Tibial artery (tissue), 4 donors: ENCODE measurements at regions of chr5 and their contacts with region 1.

Region 1: DNA sequence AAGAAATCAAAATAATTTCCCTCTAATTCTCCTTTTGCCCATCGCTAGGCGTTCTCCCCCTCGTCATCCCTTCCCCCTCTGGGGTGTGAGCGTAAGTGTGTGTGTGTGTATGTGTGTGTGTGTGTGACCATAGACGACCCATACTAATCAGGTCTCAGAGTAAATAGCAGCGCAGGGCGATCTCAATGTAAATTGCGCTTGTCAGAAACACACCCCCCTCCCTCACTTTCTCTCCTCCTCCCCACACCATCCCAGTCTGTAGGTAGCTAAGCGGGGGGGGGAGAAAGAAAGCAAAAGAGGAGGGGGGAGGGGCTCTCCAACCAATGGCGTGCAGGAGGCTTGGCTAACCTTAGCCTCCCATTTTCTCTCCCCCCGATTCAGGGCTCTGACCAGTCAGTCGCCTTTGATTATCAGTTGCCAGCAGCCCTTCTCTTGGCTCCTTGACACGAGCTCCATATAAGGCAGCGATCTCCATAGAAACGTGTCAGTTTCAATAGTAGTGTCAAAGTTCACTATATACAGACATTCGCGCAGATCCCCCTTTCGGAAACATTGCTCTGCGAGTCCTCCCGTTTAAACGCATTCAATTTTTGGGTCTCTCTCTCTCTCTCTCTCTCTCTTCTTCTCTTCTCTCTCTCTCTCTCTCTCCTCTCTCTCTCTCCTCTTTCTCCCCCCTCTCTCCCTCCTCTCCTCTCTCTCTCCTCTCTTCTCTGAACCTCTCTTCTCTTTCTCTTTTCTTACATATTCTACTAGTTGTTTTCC is at the start of gene NR2F1:
- DNase-seq: peak in 1 of 2 donors; percentile 54
- H3K4me3 ChIP-seq: peak within 1 kb of the TSS; percentile 58 to 68
- H3K27ac ChIP-seq: no peak within 1 kb of the TSS
- H3K4me1 ChIP-seq: peaks cover 0 to 47% (median 32%) of the 10 kb centered on the region in 4 donors
- H3K27me3 ChIP-seq: peaks cover 0 to 14% of the 10 kb centered on the region in 2 donors
- CTCF ChIP-seq: peak in 1 of 2 experiments; percentile 68

Region 2: DNA sequence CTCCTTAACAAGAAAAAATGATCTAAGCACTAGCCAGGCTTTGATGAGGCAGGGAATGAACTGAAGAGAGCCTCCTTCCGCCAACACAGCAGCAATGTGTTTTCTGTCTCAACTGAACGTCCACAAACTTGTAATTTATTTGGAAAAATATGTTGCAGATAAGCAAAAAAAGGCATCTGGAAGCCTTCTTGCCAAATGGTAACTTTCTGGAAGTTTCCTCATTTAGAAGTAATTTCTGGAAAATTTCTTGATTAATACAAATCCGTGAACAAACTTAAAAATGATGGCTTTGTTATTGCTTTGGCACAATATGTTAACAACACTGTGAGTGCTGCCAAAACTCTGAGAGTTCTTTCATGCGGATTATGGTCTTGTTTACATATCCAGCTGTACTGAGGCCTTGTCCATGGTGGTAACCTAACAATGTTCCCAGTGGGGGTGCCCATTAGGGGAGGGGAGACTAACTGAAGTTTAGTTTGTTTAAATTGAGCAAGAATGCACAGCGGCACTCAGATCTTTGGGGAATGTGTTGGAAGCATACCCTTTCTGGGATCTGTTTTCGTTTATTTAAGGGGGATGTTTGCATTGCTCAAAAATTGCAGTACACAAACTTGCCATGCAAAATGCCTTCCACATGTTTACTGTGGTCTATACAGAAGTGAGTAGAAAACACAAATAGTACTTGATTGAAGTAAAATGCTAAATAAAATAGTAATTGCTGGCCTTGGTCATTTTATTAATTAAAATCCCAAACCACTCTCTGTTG is 336.6 kb before region 1 on chr5:
- intact Hi-C with region 1: no loop called
- DNase-seq: no peak
- H3K4me3 ChIP-seq: no peak overlapping the region
- H3K27ac ChIP-seq: no peak overlapping the region
- H3K4me1 ChIP-seq: peaks cover 0 to 5% (median 0%) of the 10 kb centered on the region in 4 donors
- H3K27me3 ChIP-seq: no peaks in the 10 kb centered on the region
- CTCF ChIP-seq: no peak

Region 3: GRCh38 chr5:93607367-93608258 is 24.8 kb after region 1 on chr5:
- intact Hi-C with region 1: loop called (anchors 5 kb)
- DNase-seq: no peak
- H3K4me3 ChIP-seq: no peak overlapping the region
- H3K27ac ChIP-seq: no peak overlapping the region
- H3K4me1 ChIP-seq: peaks cover 0 to 28% (median 16%) of the 10 kb centered on the region in 4 donors
- H3K27me3 ChIP-seq: peaks cover 4 to 94% of the 10 kb centered on the region in 2 donors
- CTCF ChIP-seq: peak; percentile 26 to 35

Region 4: DNA sequence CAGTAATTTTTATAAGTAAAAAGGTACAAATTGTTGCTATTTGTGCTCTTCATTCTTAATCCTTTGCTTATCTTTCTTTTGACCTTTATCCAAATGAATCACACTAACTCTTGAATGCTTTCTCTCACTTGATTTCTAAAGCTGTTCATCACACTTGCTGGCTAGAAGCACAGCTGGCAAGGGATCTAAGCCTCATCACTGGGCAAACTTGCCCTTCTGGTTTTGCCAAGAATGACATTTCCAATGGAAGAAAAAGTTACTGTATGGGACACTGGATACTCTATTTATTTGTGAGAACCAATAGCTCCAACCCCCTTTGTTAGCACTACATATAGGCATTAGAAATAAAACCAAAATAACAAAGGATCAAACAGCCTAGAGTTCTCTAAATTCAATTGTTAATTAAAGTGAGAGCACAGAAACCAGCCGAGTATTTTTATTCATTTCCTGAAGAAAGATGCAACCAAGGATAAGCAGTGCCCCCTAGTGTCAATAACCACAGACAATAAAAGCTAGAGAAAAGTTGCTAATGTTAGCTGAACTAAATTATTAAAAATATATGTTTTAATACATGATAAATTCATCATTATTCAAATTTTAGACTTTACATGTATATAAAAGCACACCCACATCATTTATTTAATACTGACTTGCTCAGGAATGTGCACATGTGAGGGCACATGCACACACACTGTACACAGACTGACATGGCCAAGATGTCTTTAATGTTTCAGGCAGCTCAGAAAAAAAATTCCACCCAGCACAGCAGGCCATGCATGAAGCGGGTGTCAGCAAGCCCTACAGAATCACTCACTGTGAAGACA is 218.3 kb after region 1 on chr5:
- intact Hi-C with region 1: loop called (anchors 10 kb)
- DNase-seq: no peak
- H3K4me3 ChIP-seq: no peak overlapping the region
- H3K27ac ChIP-seq: no peak overlapping the region
- H3K4me1 ChIP-seq: peaks cover 0 to 9% (median 2%) of the 10 kb centered on the region in 4 donors
- H3K27me3 ChIP-seq: no peaks in the 10 kb centered on the region
- CTCF ChIP-seq: peak; percentile 51 to 62

Region 5: GRCh38 chr5:93926831-93927620 is 344.2 kb after region 1 on chr5:
- intact Hi-C with region 1: no loop called
- DNase-seq: no peak
- H3K4me3 ChIP-seq: no peak overlapping the region
- H3K27ac ChIP-seq: no peak overlapping the region
- H3K4me1 ChIP-seq: peaks cover 0 to 2% (median 0%) of the 10 kb centered on the region in 4 donors
- H3K27me3 ChIP-seq: no peaks in the 10 kb centered on the region
- CTCF ChIP-seq: no peak